AG04450 (cell line): ENCODE measurements at regions of chr4 and their contacts with region 1.

Region 1: GRCh38 chr4:119041951-119042560 is 93.6 kb upstream of the MYOZ2 start:
- DNase-seq: peak; percentile 61
- H3K4me3 ChIP-seq: no peak overlapping the region
- H3K27ac ChIP-seq: no peak overlapping the region
- H3K27me3 ChIP-seq: no peaks in the 10 kb centered on the region
- CTCF ChIP-seq: peak; percentile 74

Region 2: GRCh38 chr4:118865091-118865708 is 176.9 kb before region 1 on chr4:
- CTCF ChIA-PET with region 1: no interaction called
- POLR2A ChIA-PET with region 1: no interaction called
- DNase-seq: no peak
- H3K4me3 ChIP-seq: no peak overlapping the region
- H3K27ac ChIP-seq: no peak overlapping the region
- H3K27me3 ChIP-seq: peaks cover 2% of the 10 kb centered on the region
- CTCF ChIP-seq: peak; percentile 69

Region 3: GRCh38 chr4:118981839-118982381 is 60.1 kb before region 1 on chr4:
- CTCF ChIA-PET with region 1: interaction called, 49 read pairs
- POLR2A ChIA-PET with region 1: interaction called, 3 read pairs
- DNase-seq: peak; percentile 91
- H3K4me3 ChIP-seq: no peak overlapping the region
- H3K27ac ChIP-seq: no peak overlapping the region
- H3K27me3 ChIP-seq: no peaks in the 10 kb centered on the region
- CTCF ChIP-seq: peak; percentile 78

Region 4: DNA sequence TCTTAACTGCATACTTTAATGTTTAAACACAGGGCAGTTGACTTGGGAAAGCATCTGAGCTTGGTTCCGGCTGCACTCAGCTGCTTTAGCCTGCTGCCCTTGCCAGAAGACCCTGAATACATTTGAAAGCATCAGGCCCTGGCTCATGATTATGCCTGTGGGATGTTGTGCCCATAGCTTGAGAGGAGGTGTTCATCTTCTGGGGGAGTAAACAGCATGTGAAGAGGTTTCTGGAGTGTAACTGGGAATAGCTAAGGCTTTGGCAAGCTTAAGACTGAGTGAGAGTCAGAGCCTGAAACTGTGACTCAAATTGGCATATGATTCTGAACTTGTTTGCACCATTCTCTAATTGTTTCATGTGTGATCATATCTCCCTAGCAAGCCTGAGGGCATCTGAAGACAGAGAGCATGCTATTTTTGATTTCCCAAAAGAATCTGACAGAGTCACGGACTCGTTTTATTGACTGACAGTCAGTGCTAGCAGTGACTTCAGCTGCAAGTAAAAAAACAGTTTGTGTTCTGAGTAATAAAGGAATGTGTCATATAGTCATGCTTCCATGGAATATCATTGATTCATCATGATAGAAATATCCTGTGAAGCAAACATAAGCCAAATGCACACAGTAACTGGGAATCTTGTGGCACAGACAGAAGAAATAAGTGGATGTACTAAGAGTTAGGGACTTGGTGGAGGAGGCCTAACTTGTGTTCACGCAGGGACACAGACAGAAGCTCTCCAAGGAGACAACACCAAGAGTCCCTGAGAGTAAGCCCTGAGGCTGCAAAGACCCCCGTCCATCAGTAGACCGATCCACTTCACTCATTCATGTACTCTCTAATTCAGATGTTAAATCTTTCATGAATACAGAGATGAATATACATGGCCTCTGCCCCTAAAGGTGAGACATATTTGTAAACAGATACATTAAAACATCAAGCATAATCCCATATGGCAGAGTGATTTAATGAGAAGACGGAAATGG is 52.7 kb before region 1 on chr4:
- CTCF ChIA-PET with region 1: interaction called, 13 read pairs
- POLR2A ChIA-PET with region 1: interaction called, 6 read pairs
- DNase-seq: no peak
- H3K4me3 ChIP-seq: no peak overlapping the region
- H3K27ac ChIP-seq: peak overlapping the region; percentile 92
- H3K27me3 ChIP-seq: no peaks in the 10 kb centered on the region
- CTCF ChIP-seq: no peak

Region 5: DNA sequence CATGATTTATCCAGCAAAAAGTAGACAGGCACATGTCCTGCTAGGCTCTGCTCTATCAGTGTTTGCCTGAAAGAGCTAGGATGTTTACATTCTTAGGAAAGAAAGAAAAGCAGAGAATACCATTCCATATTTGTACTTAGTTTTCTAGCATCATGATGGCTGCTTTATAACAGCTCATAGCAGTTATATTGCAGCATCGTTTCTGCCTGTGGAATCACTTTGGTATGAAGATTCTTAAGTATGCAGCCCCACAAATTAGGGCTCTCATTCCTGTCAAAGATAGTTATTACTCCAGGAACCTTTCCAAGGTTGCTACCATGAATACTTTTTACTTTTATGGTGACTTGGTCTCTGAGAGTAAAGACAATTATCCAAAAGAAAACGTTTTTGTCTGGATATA is 25.4 kb before region 1 on chr4:
- CTCF ChIA-PET with region 1: interaction called, 4 read pairs
- POLR2A ChIA-PET with region 1: interaction called, 17 read pairs
- DNase-seq: peak; percentile 80
- H3K4me3 ChIP-seq: no peak overlapping the region
- H3K27ac ChIP-seq: peak overlapping the region; percentile 49
- H3K27me3 ChIP-seq: no peaks in the 10 kb centered on the region
- CTCF ChIP-seq: no peak

Region 6: GRCh38 chr4:119025916-119026661 is 16.0 kb before region 1 on chr4:
- CTCF ChIA-PET with region 1: interaction called, 21 read pairs
- POLR2A ChIA-PET with region 1: interaction called, 13 read pairs
- DNase-seq: peak; percentile 78
- H3K4me3 ChIP-seq: no peak overlapping the region; the same call in 1 of the 2 replicates
- H3K27ac ChIP-seq: peak overlapping the region; percentile 94
- H3K27me3 ChIP-seq: no peaks in the 10 kb centered on the region
- CTCF ChIP-seq: no peak

Region 7: DNA sequence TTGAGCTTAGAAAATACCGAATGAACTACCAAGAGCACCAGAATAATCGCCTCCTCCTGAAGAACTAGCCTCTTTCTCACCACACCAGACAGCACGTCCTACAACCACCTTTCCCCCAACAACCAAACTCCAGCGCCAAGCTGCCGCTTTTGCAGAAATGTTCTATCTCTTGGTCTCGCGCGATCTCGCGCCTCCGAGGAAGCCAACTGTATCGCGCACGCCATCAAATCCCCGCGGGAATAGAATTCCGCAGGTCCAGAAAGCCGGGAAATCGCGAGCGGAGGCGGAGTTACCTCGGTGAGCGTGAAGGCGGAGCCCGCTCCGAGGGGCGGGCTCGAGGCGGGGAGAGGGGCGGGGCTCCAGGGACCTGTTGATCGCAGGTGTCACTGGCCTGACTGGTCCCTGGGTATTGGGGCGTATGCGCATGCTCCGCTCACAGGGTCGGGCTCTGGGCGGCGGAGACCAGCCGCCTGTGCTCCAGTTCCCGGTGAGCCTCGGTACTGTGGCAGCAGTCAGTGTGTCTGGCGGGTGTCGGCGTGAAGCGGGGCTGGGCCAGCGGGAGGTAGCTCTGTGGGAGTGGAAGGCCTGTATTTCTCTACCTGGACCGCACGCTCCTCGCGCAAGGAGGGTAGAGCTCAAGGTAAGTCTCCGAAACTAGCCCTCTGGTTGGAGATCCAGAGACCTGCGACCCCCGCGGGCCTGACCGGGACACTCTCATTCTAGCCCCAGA is 170.3 kb after region 1 on chr4 and contains the start of gene USP53:
- CTCF ChIA-PET with region 1: interaction called, 31 read pairs
- POLR2A ChIA-PET with region 1: interaction called, 12 read pairs
- DNase-seq: peak; percentile 92
- H3K4me3 ChIP-seq: peak within 1 kb of the TSS; percentile 81
- H3K27ac ChIP-seq: peak within 1 kb of the TSS; percentile 79
- H3K27me3 ChIP-seq: no peaks in the 10 kb centered on the region
- CTCF ChIP-seq: no peak
- polyA plus RNA-seq, gene USP53: 15.6 and 19.0 TPM in 2 replicates

Region 8: GRCh38 chr4:119286377-119287002 is 244.4 kb after region 1 on chr4:
- CTCF ChIA-PET with region 1: interaction called, 18 read pairs
- POLR2A ChIA-PET with region 1: no interaction called
- DNase-seq: peak; percentile 42
- H3K4me3 ChIP-seq: no peak overlapping the region
- H3K27ac ChIP-seq: no peak overlapping the region
- H3K27me3 ChIP-seq: no peaks in the 10 kb centered on the region
- CTCF ChIP-seq: peak; percentile 65